ENCODE measurements at regions of chr2 and their contacts with region 1.

Region 1: GRCh38 chr2:42828487-42829425 is 36.4 kb upstream of the HAAO start:
- DNase-seq: peak; percentile 49
- H3K4me3 ChIP-seq: no peak overlapping the region
- H3K27ac ChIP-seq: peak overlapping the region in 1 of 2 donors; percentile 20
- H3K4me1 ChIP-seq: peaks cover under 1% of the 10 kb centered on the region
- H3K27me3 ChIP-seq: no peaks in the 10 kb centered on the region
- CTCF ChIP-seq: peak; percentile 66 to 94 (median 88)
- POLR2A ChIP-seq: no peak

Region 2: DNA sequence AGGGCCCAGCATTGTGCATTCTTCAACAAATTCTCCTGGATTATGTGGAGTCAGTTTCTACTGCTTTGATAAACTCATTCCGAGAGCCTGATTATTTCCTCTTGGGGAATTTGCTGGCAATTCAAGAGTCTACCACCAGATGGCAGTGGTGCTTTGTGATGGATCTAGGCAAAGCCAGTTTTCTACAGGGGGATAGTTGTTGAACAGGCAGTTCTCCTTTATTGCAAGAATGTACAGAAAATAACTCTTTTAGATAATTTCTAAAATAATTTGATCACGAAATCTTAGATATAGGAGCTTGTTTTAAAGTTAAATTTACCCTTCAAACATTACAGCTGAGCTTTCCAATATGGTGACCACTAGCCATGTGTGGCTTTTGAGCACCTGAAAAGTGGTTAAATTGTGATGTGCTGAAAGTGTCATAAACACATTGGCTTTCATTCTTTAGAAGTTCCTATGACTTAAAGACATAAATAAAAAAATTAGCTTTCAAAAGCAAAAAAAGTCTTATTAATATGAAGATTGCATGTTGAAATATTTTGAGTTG is 30.3 kb after region 1 on chr2:
- intact Hi-C with region 1: loop called (anchors 1 kb)
- DNase-seq: peak; percentile 56
- H3K4me3 ChIP-seq: no peak overlapping the region
- H3K27ac ChIP-seq: no peak overlapping the region
- H3K4me1 ChIP-seq: no peaks in the 10 kb centered on the region
- H3K27me3 ChIP-seq: no peaks in the 10 kb centered on the region
- CTCF ChIP-seq: peak; percentile 67 to 90 (median 84)
- POLR2A ChIP-seq: no peak

Region 3: DNA sequence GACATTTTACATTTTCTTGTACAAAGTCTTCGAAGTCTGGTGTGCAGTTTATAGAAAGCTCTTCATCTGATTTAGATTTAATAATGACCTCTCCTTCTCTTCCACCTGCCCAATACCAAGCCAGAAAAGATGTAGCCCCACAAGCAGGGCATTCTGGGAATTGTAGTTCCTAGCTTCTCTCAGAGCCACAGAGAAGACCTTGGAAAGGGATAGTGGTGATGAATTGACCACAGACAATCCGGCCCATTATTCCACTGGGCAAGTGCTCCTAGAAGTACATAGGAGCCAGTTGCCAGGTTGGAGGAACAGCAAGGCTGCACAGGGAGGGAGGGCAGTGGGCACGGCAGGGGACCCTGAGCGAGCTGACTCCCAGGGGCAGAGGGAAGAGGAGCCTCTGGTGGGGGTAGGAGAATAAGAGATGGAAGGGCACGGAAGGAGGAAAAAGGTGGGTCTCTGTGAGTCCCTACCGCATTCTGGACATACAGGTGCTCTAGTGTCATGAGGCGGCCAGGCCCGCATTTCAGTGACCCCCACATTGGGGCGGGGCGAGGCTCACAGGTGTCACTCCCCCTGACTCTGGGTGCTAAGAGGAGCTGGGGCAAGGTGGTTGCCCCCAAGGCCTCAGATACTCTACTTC is 116.1 kb after region 1 on chr2:
- intact Hi-C with region 1: loop called (anchors 5 kb)
- DNase-seq: no peak
- H3K4me3 ChIP-seq: no peak overlapping the region
- H3K27ac ChIP-seq: no peak overlapping the region
- H3K4me1 ChIP-seq: no peaks in the 10 kb centered on the region
- H3K27me3 ChIP-seq: no peaks in the 10 kb centered on the region
- CTCF ChIP-seq: no peak
- POLR2A ChIP-seq: no peak

Region 4: DNA sequence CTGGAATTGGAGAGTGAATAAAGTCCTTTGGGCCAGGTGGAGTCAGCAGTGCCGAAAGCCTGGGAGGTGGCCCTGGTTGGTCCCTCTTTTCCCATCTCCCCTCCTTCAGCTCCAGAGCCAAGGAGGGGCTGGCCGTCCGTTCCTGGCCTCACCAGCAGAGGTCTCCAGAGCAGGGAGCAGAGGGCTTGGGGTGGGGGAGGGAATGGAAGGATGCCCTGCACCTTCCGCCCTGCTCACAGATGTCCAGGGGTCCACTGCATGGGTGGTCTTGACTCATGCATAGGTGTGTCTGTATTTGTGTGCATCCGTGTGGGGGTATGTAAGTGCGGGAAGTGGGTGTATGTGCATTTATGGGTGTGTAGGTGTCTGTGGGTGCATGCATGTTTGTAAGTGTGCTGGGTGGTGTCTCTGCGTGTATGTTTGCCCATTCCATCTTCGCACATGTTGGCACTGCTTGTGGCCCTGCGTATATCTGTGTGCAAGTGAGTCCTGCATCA is 195.8 kb after region 1 on chr2:
- intact Hi-C with region 1: loop called (anchors 5 kb)
- DNase-seq: peak; percentile 32
- H3K4me3 ChIP-seq: no peak overlapping the region
- H3K27ac ChIP-seq: no peak overlapping the region
- H3K4me1 ChIP-seq: no peaks in the 10 kb centered on the region
- H3K27me3 ChIP-seq: no peaks in the 10 kb centered on the region
- CTCF ChIP-seq: peak; percentile 62 to 81 (median 72)
- POLR2A ChIP-seq: no peak